ENCODE measurements at regions of chr3 and their contacts with region 1.

Region 1: DNA sequence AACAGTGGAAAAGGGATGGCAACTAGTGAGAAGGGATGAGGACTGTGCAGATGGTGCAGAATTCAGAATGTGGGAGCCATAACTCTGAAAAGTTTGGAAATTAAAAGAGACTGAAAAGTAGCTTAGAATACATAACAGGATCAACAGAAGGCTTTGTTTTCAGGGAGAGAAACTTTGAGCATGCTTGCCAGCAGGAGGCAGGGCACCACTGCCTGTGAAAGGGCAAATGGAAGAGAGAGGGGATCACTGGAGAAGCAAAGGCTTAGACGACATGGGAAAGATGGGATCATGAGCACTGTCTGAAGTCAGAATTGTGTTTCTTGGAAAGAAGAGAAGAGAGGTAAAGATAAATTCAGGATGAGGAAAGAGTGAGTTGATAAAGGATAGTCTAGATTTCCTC is 99.6 kb downstream of the ABI3BP start:
- DNase-seq: peak; percentile 32
- H3K4me3 ChIP-seq: no peak overlapping the region
- H3K27ac ChIP-seq: no peak overlapping the region
- H3K4me1 ChIP-seq: no peaks in the 10 kb centered on the region
- H3K27me3 ChIP-seq: no peaks in the 10 kb centered on the region
- CTCF ChIP-seq: peak; percentile 64 to 87

Region 2: GRCh38 chr3:100737334-100737733 is 156.3 kb before region 1 on chr3:
- CTCF ChIA-PET with region 1: no interaction called
- dilution Hi-C with region 1: no loop called
- in situ Hi-C with region 1: no loop called
- intact Hi-C with region 1: loop called (anchors 5 kb)
- DNase-seq: peak; percentile 25
- H3K4me3 ChIP-seq: no peak overlapping the region
- H3K27ac ChIP-seq: no peak overlapping the region
- H3K4me1 ChIP-seq: no peaks in the 10 kb centered on the region
- H3K27me3 ChIP-seq: no peaks in the 10 kb centered on the region
- CTCF ChIP-seq: peak; percentile 19 to 42

Region 3: DNA sequence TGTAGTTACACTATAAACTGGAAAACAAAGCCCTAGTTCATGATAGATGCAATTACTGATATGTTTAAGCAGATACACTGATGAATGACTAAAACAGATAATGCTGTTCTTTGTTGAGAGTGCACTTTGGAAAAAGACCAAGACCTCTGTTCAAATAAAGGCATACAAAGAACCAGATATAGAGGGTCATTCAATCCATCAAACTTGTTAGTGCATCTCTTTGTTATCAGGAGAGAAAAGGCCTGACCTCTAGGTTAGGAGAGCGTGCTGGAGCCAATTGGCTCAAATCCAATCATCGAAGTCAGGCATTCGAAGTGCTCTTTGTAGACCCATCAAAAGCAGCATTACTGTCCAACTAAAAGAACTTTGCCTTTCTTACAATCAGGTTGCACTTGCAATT is 60.1 kb before region 1 on chr3:
- CTCF ChIA-PET with region 1: no interaction called
- dilution Hi-C with region 1: no loop called
- in situ Hi-C with region 1: no loop called
- intact Hi-C with region 1: no loop called
- DNase-seq: no peak
- H3K4me3 ChIP-seq: no peak overlapping the region
- H3K27ac ChIP-seq: no peak overlapping the region
- H3K4me1 ChIP-seq: no peaks in the 10 kb centered on the region
- H3K27me3 ChIP-seq: no peaks in the 10 kb centered on the region
- CTCF ChIP-seq: no peak

Region 4: GRCh38 chr3:101091489-101091888 is 197.9 kb after region 1 on chr3:
- CTCF ChIA-PET with region 1: no interaction called
- dilution Hi-C with region 1: no loop called
- in situ Hi-C with region 1: no loop called
- intact Hi-C with region 1: loop called (anchors 10 kb)
- DNase-seq: peak; percentile 77
- H3K4me3 ChIP-seq: no peak overlapping the region
- H3K27ac ChIP-seq: no peak overlapping the region
- H3K4me1 ChIP-seq: no peaks in the 10 kb centered on the region
- H3K27me3 ChIP-seq: no peaks in the 10 kb centered on the region
- CTCF ChIP-seq: peak; percentile 25 to 47

Region 5: GRCh38 chr3:101203411-101203810 is 309.8 kb after region 1 on chr3:
- CTCF ChIA-PET with region 1: no interaction called
- dilution Hi-C with region 1: no loop called
- in situ Hi-C with region 1: loop called (anchors 5 kb)
- intact Hi-C with region 1: no loop called
- DNase-seq: peak; percentile 41
- H3K4me3 ChIP-seq: no peak overlapping the region
- H3K27ac ChIP-seq: no peak overlapping the region
- H3K4me1 ChIP-seq: peaks cover 19% of the 10 kb centered on the region
- H3K27me3 ChIP-seq: no peaks in the 10 kb centered on the region
- CTCF ChIP-seq: no peak

Region 6: DNA sequence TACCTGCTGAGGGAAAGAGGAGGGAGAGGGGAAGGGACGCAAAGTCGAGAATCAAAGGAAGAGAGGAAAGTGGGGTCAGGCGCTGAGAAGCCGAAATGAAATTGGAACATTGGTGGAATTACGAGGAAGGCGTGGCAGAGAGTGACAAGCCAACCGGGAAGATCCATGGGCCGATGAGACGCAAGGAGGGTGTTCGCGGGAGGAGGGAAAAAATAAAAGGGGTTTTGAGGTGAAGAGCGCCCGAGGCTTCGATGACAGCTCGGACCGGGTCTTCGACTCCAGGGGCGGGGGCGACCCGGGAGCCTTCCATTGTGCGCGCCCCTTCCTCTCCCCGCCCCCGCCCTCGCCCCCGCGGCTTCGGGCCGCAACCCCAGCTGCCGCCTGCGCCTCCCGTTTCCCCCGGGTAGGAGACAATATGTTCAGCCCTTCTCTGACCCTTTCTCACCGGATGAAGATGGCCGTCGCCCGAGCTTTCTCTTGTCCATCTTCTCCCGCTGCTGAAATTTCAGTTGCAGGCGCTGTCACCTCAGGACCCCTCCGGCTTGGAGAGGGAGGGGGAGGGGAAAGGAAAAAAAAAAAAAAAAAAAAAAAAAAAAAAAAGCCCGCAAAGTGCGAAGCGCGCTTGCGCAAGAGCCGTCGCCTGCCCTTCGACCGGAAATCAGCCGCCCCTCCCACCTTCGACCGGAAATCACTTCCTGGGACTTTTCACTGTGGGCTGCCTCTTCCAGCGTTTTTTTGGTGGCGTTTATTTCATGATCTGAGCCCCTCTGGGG is 619.2 kb after region 1 on chr3 and contains the start of gene SENP7:
- CTCF ChIA-PET with region 1: interaction called, 3 read pairs
- dilution Hi-C with region 1: no loop called
- in situ Hi-C with region 1: no loop called
- intact Hi-C with region 1: loop called (anchors 10 kb)
- DNase-seq: peak; percentile 83
- H3K4me3 ChIP-seq: peak within 1 kb of the TSS; percentile 68 to 94 (median 69)
- H3K27ac ChIP-seq: peak within 1 kb of the TSS; percentile 85
- H3K4me1 ChIP-seq: peaks cover 14% of the 10 kb centered on the region
- H3K27me3 ChIP-seq: no peaks in the 10 kb centered on the region
- CTCF ChIP-seq: no peak
- total RNA-seq, gene SENP7: 7.2 to 8.9 TPM

Region 7: GRCh38 chr3:101635954-101636798 is 742.6 kb after region 1 on chr3:
- CTCF ChIA-PET with region 1: no interaction called
- dilution Hi-C with region 1: no loop called
- in situ Hi-C with region 1: no loop called
- intact Hi-C with region 1: loop called (anchors 10 kb)
- DNase-seq: peak; percentile 37
- H3K4me3 ChIP-seq: no peak overlapping the region
- H3K27ac ChIP-seq: no peak overlapping the region
- H3K4me1 ChIP-seq: no peaks in the 10 kb centered on the region
- H3K27me3 ChIP-seq: no peaks in the 10 kb centered on the region
- CTCF ChIP-seq: peak; percentile 49 to 60